AG04450 (cell line): ENCODE measurements at regions of chr12 and their contacts with region 1.

Region 1: GRCh38 chr12:89352492-89353187 is at the start of gene DUSP6:
- DNase-seq: peak; percentile 96
- H3K4me3 ChIP-seq: peak within 1 kb of the TSS; percentile 98
- H3K27ac ChIP-seq: peak within 1 kb of the TSS; percentile 99
- H3K27me3 ChIP-seq: no peaks in the 10 kb centered on the region
- CTCF ChIP-seq: no peak
- polyA plus RNA-seq, gene DUSP6: 27.9 and 32.0 TPM in 2 replicates

Region 2: DNA sequence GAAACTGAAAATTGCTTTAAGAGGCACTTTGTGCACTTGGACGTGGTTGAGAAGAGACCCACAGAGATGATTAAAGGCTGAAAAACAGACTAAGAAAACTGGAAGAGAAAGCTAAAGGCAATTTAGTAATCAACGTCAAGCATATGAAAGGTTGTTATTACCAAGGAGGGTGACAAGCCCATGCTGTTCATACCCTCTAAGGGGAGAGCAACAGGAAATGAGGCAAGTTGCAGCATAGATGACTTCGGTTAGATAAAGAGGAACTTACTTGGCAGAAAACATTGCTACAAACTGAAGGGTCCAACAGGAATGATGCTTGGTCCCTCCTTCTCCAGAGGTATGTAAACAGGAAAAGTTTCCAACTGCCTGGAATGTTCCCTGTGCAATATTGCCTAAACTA is 108.1 kb before region 1 on chr12:
- CTCF ChIA-PET with region 1: no interaction called
- POLR2A ChIA-PET with region 1: interaction called, 13 read pairs
- DNase-seq: no peak
- H3K4me3 ChIP-seq: no peak overlapping the region; the same call in 1 of the 2 replicates
- H3K27ac ChIP-seq: peak overlapping the region; percentile 67
- H3K27me3 ChIP-seq: no peaks in the 10 kb centered on the region
- CTCF ChIP-seq: no peak

Region 3: GRCh38 chr12:89384050-89384758 is 31.6 kb after region 1 on chr12:
- CTCF ChIA-PET with region 1: interaction called, 3 read pairs
- POLR2A ChIA-PET with region 1: interaction called, 16 read pairs
- DNase-seq: peak; percentile 87
- H3K4me3 ChIP-seq: no peak overlapping the region
- H3K27ac ChIP-seq: peak overlapping the region; percentile 94
- H3K27me3 ChIP-seq: no peaks in the 10 kb centered on the region
- CTCF ChIP-seq: no peak

Region 4: DNA sequence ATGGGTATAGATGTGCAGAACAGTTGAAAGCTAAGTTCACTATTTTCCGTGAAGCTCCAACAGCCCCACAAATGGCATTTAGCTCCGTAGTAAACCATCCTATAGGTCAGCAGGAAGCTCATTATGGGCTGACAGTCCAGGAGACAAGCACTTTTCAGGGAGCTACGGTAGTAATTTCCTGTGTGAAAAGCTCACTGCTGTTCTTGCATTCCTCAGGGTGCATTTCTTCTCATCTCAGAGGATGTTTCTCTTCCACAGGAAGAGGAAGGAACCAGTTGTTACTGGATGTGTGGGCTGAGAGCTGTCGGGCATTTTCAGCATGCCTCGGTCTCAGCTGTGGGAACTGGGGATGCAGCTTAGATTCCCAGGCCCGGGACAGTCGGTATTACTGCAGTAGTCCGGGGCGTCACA is 99.2 kb after region 1 on chr12:
- CTCF ChIA-PET with region 1: interaction called, 3 read pairs
- POLR2A ChIA-PET with region 1: interaction called, 41 read pairs
- DNase-seq: peak; percentile 60
- H3K4me3 ChIP-seq: no peak overlapping the region; the same call in 1 of the 2 replicates
- H3K27ac ChIP-seq: peak overlapping the region; percentile 54
- H3K27me3 ChIP-seq: no peaks in the 10 kb centered on the region
- CTCF ChIP-seq: no peak

Region 5: DNA sequence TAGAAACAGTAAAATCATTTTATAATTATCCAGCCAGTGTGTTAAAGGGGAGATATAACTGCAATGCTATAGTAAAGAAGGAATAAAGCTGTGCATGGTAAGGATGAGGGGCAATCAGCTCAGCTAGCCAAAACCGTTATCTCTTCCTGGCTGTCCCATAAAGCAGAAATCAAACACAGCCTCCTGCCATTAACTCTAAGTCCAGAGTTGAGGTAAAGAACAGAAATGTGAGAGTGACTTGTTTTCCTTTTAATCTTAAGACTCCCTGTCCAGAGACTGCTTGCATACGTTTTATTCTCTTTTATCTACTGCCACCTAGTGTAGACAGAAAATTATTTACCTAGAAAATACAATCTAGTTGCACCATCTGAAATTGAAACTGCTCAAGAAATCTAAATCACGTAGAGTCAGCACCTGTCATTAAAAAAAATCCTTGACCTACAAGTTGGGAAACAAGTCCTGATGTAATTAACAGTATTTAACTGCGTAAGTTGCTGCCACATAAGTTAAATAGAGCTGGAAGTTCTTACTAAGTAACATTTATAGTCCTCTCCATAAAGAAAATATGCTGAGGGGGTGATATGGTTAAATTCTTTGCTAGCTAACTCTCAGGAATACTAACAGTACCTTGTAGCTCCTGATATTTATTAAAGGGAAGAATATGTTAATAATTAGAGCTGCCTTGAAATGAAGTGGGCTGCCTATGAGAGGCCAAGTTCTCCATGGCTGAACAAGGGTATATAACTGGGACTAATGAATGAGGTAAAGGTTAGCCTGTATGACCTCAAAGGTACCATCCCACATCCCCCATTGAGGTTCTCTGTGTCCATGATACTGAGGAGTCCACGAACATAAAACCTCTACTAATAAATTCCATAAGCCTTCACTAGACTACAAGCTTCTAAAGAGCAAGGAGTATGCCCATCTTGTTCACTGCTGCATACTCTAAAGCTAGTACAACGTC is 109.3 kb after region 1 on chr12:
- CTCF ChIA-PET with region 1: interaction called, 48 read pairs
- POLR2A ChIA-PET with region 1: interaction called, 8 read pairs
- DNase-seq: peak; percentile 58
- H3K4me3 ChIP-seq: no peak overlapping the region; the same call in 1 of the 2 replicates
- H3K27ac ChIP-seq: no peak overlapping the region
- H3K27me3 ChIP-seq: no peaks in the 10 kb centered on the region
- CTCF ChIP-seq: peak; percentile 49